ENCODE measurements at regions of chr16 and their contacts with region 1.

Region 1: GRCh38 chr16:87387942-87388817 is 4.0 kb upstream of the MAP1LC3B start:
- DNase-seq: peak; percentile 99
- H3K4me3 ChIP-seq: no peak overlapping the region
- H3K27ac ChIP-seq: peak overlapping the region; percentile 84
- H3K4me1 ChIP-seq: peaks cover 21% of the 10 kb centered on the region
- H3K27me3 ChIP-seq: no peaks in the 10 kb centered on the region
- CTCF ChIP-seq: no peak
- POLR2A ChIP-seq: peak; percentile 8

Region 2: DNA sequence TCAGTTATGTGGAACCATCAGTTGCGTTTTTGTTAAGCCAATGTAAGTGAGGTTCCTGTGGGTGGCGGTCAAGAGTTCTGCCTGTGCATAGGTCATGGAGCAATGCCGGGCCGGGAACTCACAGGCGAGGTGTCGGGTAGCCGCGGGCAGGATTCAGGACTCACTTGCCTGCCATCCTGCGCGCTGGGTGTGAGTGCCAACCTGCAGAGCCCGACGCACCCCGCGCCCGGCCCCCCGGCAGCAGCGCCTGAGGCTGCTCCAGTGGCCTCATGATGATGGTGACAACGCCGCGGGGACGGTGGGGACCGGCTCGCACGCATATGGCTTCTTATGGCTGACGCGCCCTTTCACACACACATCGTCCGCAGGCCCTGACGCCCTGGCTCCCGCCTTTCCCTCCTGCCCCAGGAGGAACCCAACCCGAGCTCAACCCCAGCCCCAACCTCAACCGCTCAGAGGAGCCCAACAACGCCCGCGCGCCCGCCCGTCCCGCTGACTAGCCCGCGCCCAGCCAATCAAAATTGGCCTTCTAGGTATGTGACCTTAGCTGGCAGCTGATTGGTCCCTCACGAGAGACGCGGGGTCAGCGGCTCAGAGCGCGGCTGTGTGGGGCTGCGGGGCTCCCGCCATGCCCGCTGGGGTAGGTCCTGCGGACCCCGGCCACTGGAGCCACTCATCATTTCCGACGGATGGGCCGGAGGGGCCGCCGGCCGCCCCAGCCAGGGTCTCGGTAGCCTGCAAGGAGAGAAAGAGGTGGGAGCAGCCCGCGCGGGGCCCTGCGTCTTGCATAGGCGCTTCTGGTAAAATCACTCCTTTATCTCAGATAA is 71.0 kb before region 1 on chr16 and contains the start of gene C16orf95:
- CTCF ChIA-PET with region 1: interaction called, 5 read pairs
- POLR2A ChIA-PET with region 1: interaction called, 6 read pairs
- dilution Hi-C with region 1: no loop called
- intact Hi-C with region 1: loop called (anchors 1 kb)
- DNase-seq: peak; percentile 95
- H3K4me3 ChIP-seq: peak within 1 kb of the TSS; percentile 91 to 99 (median 94)
- H3K27ac ChIP-seq: peak within 1 kb of the TSS; percentile 84
- H3K4me1 ChIP-seq: peaks cover 7% of the 10 kb centered on the region
- H3K27me3 ChIP-seq: no peaks in the 10 kb centered on the region
- CTCF ChIP-seq: peak; percentile 41 to 60
- POLR2A ChIP-seq: peak; percentile 82
- total RNA-seq, gene C16orf95: 4.8 and 6.6 TPM in 2 replicates

Region 3: DNA sequence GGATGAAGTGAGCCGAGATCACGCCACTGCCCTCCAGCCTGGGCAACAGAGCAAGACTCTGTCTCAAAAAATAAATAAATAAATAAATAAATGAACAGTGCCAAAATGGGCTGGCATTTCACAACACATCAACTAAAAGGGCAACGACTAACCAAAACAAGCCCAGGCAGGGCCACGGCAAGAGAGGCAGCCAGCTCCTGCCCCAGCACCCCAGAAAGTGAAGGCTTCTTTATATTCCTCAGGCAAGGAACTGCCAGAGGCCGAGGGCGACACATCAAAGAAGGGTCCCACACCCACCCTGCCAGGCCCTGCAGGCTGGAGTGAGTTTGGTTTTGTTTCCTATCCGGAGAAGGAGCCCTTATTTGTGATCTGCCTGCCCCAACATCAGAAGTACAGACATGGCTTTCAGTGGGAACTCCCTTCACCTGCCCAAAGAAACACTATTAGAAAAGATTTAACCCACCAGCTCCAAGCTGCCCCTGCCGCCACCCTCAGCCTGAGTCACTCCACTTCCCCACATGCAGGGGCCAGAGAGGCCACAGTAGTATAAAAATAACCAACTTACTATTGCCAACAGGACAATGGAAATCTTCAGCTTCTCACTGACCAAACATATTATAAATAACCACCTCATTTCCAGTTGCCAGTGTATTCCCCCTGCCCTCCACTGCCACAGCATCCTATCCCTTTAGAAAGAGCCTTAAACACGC is 12.6 kb before region 1 on chr16:
- CTCF ChIA-PET with region 1: interaction called, 5 read pairs
- POLR2A ChIA-PET with region 1: no interaction called
- dilution Hi-C with region 1: no loop called
- intact Hi-C with region 1: loop called (anchors 1 kb)
- DNase-seq: peak; percentile 92
- H3K4me3 ChIP-seq: no peak overlapping the region
- H3K27ac ChIP-seq: peak overlapping the region; percentile 56
- H3K4me1 ChIP-seq: peaks cover 16% of the 10 kb centered on the region
- H3K27me3 ChIP-seq: no peaks in the 10 kb centered on the region
- CTCF ChIP-seq: no peak
- POLR2A ChIP-seq: no peak

Region 4: DNA sequence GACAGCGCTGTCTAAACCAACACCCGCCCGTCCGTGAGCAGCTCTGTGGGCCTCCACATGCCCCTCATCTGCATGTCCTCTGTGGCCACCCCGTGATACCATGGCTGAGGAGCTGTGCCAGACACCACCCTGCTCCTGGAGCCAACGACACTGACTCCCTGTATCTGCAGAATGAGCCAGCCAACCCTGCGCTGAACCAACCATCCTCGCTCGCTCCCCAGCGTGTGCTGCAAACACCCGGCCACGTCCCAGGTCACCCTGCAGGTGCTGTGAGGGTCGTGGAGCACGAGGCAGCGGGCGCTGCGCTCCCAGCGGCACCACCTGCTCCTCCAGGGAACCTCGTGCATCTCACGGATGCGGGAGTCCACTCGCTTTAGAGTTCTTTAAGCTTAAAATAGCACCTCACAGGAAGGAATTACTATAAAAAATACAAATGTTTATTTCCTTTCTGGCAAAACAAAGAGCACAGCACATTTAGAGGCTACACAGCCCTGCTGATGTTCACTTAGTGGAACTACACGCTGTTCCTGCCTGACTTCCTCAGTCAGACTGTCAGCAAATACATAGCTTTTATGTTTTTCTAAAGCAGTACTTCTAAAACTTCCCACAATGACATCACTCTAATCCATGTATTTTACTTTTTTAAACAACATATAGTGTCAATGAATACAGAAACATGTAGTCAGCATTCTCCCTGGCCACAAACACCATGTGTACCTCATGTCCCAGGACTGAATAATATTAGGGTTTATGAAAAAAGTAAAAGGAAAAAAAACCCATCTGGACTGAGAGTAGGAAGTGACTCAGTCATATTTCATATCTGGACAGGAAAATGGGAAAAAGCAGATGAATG is 47.4 kb after region 1 on chr16:
- CTCF ChIA-PET with region 1: no interaction called
- POLR2A ChIA-PET with region 1: no interaction called
- dilution Hi-C with region 1: no loop called
- intact Hi-C with region 1: loop called (anchors 5 kb)
- DNase-seq: peak; percentile 95
- H3K4me3 ChIP-seq: peak overlapping the region in 2 of 3 experiments; percentile 10
- H3K27ac ChIP-seq: peak overlapping the region; percentile 90
- H3K4me1 ChIP-seq: peaks cover 18% of the 10 kb centered on the region
- H3K27me3 ChIP-seq: no peaks in the 10 kb centered on the region
- CTCF ChIP-seq: no peak
- POLR2A ChIP-seq: no peak

Measured in endothelial cell of umbilical vein (primary cell).